Dorsolateral prefrontal cortex (tissue), 120 donors: ENCODE measurements at regions of chr6 and their contacts with region 1.

Region 1: DNA sequence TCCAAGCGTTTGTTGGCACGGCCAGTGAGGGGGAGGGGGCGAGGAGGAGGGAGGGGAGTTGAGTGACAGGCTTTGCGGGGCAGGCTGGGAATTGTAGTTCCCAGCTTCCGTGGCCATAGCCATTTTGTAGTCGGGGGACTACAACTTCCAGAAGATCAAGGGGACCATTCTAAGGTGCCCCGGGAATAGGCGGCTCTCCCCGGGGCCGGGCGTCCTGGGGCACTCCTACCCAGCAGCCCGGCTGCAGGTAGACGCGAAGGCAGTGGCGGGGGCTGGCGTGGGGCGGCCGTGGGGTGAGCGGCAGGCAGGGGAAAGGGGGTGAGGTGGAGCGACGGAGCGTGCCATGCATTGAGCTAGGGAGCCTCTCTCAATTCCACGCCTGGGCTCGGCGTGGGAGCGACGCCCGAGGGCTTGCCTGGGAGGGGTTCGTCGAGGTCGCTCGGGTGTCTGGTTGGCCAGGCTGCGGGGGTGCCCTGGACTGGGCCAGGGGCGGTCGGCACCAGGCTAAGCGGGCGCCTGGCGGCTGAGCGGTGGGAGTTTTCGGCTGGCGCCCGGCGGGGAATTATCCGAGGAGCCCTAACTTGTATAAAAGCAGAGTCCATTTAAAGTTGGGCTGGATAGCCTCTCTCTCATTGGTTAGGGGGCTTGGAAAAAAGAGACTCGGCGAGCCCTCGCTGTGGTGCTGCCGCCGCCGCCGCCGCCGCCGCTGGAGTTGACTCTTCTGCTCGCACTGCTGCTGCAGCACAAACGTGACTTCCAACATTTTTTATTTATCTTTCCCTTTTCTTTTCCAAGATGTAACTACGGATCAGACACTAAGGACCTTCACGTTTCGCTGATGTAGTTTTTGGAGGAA is at the start of gene JARID2:
- DNase-seq: peak; percentile 95 to 98 (median 97)
- H3K4me3 ChIP-seq: peak within 1 kb of the TSS; percentile 62 to 97 (median 89)
- H3K27ac ChIP-seq: peak within 1 kb of the TSS; percentile 79 to 100 (median 97)
- H3K27me3 ChIP-seq: no peaks in the 10 kb centered on the region
- CTCF ChIP-seq: peak in 36 of 56 donors; percentile 5 to 46 (median 20)
- total RNA-seq, gene JARID2: 14.2 to 26.7 (median 20.5) TPM

Region 2: DNA sequence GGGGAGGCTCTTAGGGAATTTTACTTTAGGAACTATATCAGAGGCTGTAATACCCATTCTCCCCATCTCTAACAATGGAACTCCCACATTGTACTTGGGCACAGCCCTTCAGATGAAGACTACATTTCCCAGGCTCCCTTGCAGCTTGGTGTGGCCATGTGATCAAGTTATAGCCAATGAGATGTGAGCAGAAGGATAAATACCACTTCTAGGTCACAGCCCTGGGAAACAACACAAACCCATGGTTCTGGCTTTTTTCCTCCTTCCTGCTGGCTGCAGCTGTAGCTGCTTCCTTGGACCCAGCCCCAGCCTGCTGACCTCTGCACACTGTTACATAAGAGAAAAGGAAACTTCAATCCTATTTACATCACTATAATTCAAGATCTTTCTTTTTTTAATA is 445.7 kb before region 1 on chr6:
- intact Hi-C with region 1: loop called in 1 of 2 experiments (anchors 10 kb)
- DNase-seq: peak in 7 of 10 donors; percentile 10 to 67 (median 53)
- H3K4me3 ChIP-seq: no peak overlapping the region
- H3K27ac ChIP-seq: peak overlapping the region in 7 of 59 donors; percentile 5 to 62 (median 40)
- H3K27me3 ChIP-seq: no peaks in the 10 kb centered on the region
- CTCF ChIP-seq: peak in 2 of 56 donors; percentile 10

Region 3: GRCh38 chr6:15232836-15233510 is 12.6 kb before region 1 on chr6:
- intact Hi-C with region 1: no loop called
- DNase-seq: no peak
- H3K4me3 ChIP-seq: no peak overlapping the region
- H3K27ac ChIP-seq: no peak overlapping the region
- H3K27me3 ChIP-seq: no peaks in the 10 kb centered on the region
- CTCF ChIP-seq: no peak

Region 4: GRCh38 chr6:15399641-15400470 is 154.3 kb after region 1 on chr6:
- intact Hi-C with region 1: loop called (anchors 1 to 2 kb)
- DNase-seq: peak; percentile 66 to 88 (median 79)
- H3K4me3 ChIP-seq: peak overlapping the region; percentile 38 to 74 (median 59)
- H3K27ac ChIP-seq: peak overlapping the region; percentile 46 to 96 (median 89)
- H3K27me3 ChIP-seq: no peaks in the 10 kb centered on the region
- CTCF ChIP-seq: peak in 5 of 56 donors; percentile 8 to 16 (median 13)

Region 5: GRCh38 chr6:15431762-15432483 is 186.3 kb after region 1 on chr6:
- intact Hi-C with region 1: no loop called
- DNase-seq: no peak
- H3K4me3 ChIP-seq: no peak overlapping the region
- H3K27ac ChIP-seq: peak overlapping the region in 40 of 59 donors; percentile 15 to 82 (median 65)
- H3K27me3 ChIP-seq: no peaks in the 10 kb centered on the region
- CTCF ChIP-seq: no peak

Region 6: GRCh38 chr6:15491255-15491985 is 245.8 kb after region 1 on chr6:
- intact Hi-C with region 1: loop called in 1 of 2 experiments (anchors 2 kb)
- DNase-seq: peak; percentile 70 to 89 (median 83)
- H3K4me3 ChIP-seq: peak overlapping the region in 3 of 59 donors; percentile 0 to 6 (median 3)
- H3K27ac ChIP-seq: peak overlapping the region in 17 of 59 donors; percentile 1 to 67 (median 32)
- H3K27me3 ChIP-seq: no peaks in the 10 kb centered on the region
- CTCF ChIP-seq: peak; percentile 74 to 99 (median 96)

Region 7: DNA sequence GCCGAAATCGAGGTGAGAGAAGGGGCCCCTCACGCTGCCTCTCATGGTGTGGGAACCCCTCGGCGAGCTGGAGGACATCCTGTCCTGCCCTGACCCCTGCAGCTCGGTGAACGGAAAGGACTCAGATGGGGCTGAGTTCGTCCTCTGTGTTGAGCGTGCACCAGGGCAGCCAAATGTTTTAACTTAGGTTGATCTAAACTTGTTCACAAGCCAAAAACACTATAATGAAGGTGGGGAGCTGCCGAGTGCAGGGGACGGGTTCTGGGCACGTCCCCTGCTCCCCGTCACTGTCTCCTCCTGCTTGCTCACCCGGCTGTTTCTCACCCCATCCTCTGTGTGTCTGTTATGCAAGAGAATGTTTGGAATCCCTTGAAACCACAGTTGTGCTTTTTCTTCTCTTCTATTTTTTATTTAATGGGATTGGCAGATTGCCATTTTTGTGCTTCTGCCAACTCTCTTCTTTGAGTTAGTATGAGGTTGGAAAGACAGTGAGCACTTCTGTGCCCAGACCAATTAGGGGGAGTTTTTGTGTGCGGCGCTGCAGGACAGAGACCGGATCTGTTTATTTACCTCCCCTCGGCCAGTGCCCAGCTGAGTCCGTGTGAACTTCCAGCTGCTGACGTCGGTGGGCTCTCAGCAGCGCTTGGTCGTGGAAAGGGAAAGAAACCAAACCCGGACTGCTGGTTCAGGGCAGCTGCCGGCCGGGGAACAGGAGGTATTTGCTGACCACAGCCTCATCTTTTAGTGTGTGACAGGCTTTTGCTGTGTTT is 259.2 kb after region 1 on chr6:
- intact Hi-C with region 1: loop called in 1 of 2 experiments (anchors 5 kb)
- DNase-seq: peak; percentile 35 to 80 (median 68)
- H3K4me3 ChIP-seq: peak overlapping the region in 48 of 59 donors; percentile 0 to 49 (median 27)
- H3K27ac ChIP-seq: peak overlapping the region in 57 of 59 donors; percentile 2 to 87 (median 68)
- H3K27me3 ChIP-seq: no peaks in the 10 kb centered on the region
- CTCF ChIP-seq: peak in 20 of 56 donors; percentile 1 to 40 (median 16)

Region 8: DNA sequence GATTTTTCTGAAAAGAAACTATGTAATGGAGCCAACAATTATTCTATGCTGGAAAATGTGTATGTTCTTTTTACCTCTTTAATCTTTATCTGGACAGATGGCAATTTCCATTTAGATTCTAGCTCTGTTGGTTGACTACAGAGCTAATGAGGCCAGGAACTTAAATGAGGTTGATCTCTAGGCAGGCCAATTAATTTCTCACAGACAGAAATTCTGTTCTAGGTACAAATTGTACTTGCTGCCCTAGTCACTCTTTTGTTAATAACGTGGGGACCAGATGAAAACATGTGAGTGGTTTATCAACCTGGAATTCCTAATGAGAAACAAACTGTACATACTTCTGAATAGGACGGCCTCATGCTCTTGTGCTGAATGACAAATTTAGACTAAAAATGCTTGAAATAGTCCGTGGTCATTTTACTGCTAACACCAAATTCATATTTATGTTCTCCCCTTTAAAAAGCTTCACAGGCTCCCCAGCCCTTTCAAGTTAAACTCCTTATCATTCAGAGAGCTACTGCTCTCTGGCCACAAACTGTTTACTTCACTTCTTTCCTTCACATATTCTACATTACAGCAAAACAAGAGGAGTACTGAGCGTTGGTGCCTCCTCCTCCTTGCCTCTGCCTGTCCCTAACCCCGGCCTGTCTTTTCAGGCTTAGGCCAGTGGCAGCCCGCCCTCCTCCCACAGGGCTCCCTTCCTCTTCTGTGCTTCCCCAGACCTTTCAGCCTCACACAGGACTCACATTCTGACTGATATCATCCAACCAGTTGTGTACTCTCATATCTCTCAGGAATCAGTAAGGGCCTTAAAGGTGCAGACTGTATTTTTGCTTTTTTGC is 375.8 kb after region 1 on chr6:
- intact Hi-C with region 1: loop called (anchors 5 to 10 kb)
- DNase-seq: peak in 1 of 10 donors; percentile 25
- H3K4me3 ChIP-seq: no peak overlapping the region
- H3K27ac ChIP-seq: peak overlapping the region in 31 of 59 donors; percentile 12 to 73 (median 55)
- H3K27me3 ChIP-seq: no peaks in the 10 kb centered on the region
- CTCF ChIP-seq: no peak

Region 9: DNA sequence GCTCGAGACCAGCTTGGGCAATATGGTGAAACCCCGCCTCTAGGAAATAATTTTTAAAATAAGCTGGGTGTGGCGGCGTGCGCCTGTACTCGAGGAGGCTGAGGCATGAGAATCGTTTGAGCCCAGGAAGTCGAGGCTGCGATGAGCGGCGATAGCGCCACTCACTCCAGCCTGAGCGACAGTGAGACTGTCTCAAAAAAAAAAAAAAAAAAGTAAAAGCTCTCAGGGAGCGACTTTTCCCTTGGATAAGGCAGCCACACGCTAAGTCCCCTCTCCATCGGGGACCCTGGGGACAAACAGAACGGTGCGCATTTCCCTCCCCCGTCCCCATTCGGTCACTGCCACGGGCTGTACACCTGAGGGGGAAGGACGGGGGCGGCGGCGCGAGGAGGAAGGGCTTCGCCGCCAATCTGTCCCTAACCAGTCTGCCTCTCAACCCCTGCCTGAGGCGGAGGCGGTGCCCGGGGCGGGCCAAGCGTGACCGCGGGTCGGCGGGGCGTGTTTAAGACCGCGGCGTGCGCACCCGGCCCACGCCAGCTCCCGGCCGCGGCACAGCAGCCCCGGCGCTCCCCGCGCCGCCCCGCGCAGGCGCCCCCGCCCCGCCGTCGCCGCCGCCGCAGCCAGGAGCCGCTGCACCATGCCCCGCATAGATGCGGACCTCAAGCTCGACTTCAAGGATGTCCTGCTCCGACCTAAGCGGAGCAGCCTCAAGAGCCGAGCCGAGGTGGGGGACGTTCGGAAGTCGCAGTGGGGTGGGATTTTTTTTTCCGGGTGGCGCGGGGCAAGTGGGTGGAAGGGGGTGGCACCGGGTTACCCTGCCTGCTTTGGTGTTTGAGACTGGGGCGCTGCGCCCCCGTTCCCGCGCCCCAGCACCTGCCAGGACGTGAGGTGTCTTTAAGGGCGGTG is 992.7 kb after region 1 on chr6 and contains the start of gene GMPR:
- intact Hi-C with region 1: no loop called
- DNase-seq: peak in 7 of 10 donors; percentile 27 to 75 (median 47)
- H3K4me3 ChIP-seq: peak within 1 kb of the TSS; percentile 49 to 84 (median 69)
- H3K27ac ChIP-seq: peak within 1 kb of the TSS in 33 of 59 donors; percentile 4 to 82 (median 51)
- H3K27me3 ChIP-seq: no peaks in the 10 kb centered on the region
- CTCF ChIP-seq: peak in 2 of 56 donors; percentile 2 to 11
- total RNA-seq, gene GMPR: 4.8 to 47.1 (median 16.9) TPM